Dorsolateral prefrontal cortex (tissue), 120 donors: ENCODE measurements at regions of chr2 and their contacts with region 1.

Region 1: DNA sequence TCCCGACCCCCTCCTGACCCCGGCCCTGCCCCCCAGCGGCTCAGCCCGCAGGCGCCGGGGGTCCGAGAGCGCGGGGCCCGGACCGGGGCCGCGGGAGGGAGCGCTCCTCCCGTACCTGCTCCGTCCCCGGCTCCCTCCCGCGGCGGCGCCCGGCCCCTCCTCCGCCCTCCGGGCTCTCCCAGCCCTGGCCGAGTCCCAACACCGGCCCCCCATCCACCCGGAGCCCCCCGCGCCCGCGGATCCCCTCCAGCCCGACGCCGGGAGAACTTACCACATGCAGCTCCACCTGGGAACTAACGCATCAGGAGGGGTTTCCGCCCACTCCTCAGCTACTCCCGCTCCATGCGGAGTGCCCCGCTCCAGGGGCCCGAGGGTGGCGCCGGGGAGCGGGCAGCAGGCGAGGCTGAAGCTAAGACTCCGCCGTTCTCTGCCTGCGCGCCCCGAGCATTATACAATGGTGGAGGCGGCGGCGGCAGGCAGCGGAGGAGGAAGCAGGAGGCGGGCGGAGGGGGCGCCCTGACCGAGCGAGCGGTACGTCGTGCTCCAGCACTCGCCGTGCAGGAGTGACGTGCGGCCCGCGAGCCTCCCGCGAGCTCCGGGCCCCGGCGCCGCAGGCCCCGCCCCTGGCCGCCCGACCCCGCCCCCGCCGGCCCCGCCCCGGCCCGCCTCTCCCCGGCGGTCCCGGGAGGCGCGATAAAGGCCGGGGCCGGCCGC is at the start of gene SERTAD2:
- DNase-seq: peak; percentile 72 to 90 (median 83)
- H3K4me3 ChIP-seq: peak within 1 kb of the TSS; percentile 74 to 99 (median 93)
- H3K27ac ChIP-seq: peak within 1 kb of the TSS; percentile 83 to 99 (median 96)
- H3K27me3 ChIP-seq: no peaks in the 10 kb centered on the region
- CTCF ChIP-seq: peak in 25 of 56 donors; percentile 3 to 41 (median 16)
- total RNA-seq, gene SERTAD2: 7.8 to 24.8 (median 13.4) TPM

Region 2: GRCh38 chr2:63364866-63365265 is 1288.6 kb before region 1 on chr2:
- intact Hi-C with region 1: no loop called
- DNase-seq: no peak
- H3K4me3 ChIP-seq: no peak overlapping the region
- H3K27ac ChIP-seq: no peak overlapping the region
- H3K27me3 ChIP-seq: no peaks in the 10 kb centered on the region
- CTCF ChIP-seq: no peak

Region 3: DNA sequence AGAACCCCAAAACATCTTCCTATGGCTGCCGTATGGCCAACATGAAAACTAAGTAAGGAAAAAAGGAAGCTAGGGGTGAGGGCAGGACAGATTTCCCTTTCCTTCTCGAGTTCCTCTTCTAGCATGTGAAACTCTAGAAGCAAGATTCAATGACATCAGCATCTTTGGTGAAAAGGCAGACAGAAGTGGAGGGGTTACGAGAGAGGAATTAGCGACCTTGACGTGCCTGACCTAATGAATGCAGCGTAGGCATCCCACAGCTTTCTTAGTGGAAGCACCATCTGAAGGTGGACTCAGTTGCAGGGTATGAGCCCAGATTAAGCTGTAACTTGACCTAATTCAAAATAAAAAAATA is 461.4 kb before region 1 on chr2:
- intact Hi-C with region 1: no loop called
- DNase-seq: no peak
- H3K4me3 ChIP-seq: no peak overlapping the region
- H3K27ac ChIP-seq: peak overlapping the region in 10 of 59 donors; percentile 4 to 71 (median 35)
- H3K27me3 ChIP-seq: no peaks in the 10 kb centered on the region
- CTCF ChIP-seq: no peak

Region 4: GRCh38 chr2:64523666-64524603 is 129.6 kb before region 1 on chr2 and contains the start of gene AFTPH:
- intact Hi-C with region 1: loop called (anchors 10 kb)
- DNase-seq: peak; percentile 97 to 99 (median 98)
- H3K4me3 ChIP-seq: peak within 1 kb of the TSS; percentile 64 to 99 (median 92)
- H3K27ac ChIP-seq: peak within 1 kb of the TSS; percentile 79 to 98 (median 94)
- H3K27me3 ChIP-seq: no peaks in the 10 kb centered on the region
- CTCF ChIP-seq: peak in 42 of 56 donors; percentile 5 to 61 (median 30)
- total RNA-seq, gene AFTPH: 26.7 to 61.2 (median 44.9) TPM

Region 5: DNA sequence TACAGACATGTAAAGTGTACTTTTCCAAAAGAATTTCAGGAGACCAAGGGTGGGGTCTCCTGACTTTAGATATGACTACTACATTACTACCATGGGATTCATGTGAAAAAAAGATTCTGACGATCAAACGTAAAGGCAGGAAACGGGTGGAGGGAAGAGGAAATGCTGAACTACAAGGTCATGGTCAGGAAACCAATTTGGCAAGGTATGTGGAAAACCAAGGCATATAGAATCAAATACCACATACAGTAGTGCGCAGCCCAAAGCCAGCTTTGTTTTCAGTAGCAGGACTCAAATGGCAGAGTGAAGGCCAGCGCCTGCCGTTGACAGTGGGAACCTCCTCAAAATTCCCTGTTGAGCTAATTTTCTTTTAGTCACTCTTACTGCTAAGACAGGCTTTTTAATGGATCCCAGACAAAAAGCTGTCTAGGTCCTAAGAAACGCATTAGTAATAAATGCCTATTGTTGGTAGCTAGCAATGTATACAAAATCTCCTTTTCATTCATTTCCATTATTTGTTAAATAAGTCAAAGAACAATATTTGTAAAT is 57.8 kb after region 1 on chr2:
- intact Hi-C with region 1: loop called in 1 of 2 experiments (anchors 10 kb)
- DNase-seq: no peak
- H3K4me3 ChIP-seq: no peak overlapping the region
- H3K27ac ChIP-seq: no peak overlapping the region
- H3K27me3 ChIP-seq: no peaks in the 10 kb centered on the region
- CTCF ChIP-seq: no peak

Region 6: DNA sequence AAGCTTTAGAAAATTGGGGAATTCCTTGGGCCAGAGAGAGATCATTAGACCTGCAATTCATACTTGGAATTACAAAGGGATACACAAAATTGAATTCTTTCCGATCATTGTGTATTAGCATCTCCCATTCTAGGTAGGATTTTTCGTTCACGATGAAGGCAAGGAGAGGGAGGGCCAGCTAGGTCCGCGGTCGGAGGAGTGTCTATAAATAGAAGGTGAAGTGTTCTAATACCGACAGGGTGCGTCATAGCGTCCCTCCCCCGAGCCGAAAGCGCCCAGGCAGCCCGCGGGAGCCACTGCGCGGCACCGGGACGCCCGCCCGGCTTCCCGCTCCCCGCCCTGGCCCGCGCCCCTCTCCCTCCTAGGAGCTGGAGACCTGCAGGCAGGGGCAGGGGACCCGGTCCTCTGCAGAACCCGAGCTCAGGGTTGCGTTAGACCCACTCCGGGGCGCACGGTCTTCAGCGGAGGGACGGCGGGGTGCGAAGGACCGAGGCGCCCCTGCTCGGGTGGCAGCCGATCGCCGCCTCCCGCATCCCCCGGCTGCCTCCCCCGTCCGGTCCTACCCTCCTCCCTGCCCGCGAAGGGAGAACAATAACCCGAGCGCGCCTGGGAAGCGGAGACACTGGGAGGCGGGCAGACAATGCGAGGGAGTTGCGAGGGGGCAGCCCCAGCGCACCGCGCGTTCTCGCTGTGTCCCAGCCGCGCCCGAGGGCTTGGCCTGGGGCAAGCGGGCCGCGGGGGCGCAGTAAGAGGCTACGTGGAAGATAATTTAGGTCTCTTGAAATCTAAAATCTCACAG is 114.4 kb after region 1 on chr2:
- intact Hi-C with region 1: loop called (anchors 5 kb)
- DNase-seq: peak; percentile 72 to 92 (median 88)
- H3K4me3 ChIP-seq: peak overlapping the region; percentile 56 to 92 (median 81)
- H3K27ac ChIP-seq: peak overlapping the region; percentile 92 to 100 (median 99)
- H3K27me3 ChIP-seq: no peaks in the 10 kb centered on the region
- CTCF ChIP-seq: peak in 42 of 56 donors; percentile 4 to 63 (median 26)

Region 7: GRCh38 chr2:64831134-64831976 is 177.8 kb after region 1 on chr2:
- intact Hi-C with region 1: loop called (anchors 2 to 10 kb)
- DNase-seq: peak; percentile 18 to 85 (median 68)
- H3K4me3 ChIP-seq: peak overlapping the region in 43 of 59 donors; percentile 1 to 64 (median 31)
- H3K27ac ChIP-seq: peak overlapping the region in 58 of 59 donors; percentile 10 to 94 (median 82)
- H3K27me3 ChIP-seq: no peaks in the 10 kb centered on the region
- CTCF ChIP-seq: peak; percentile 30 to 92 (median 82)